ENCODE measurements at regions of chr12 and their contacts with region 1.

Region 1: DNA sequence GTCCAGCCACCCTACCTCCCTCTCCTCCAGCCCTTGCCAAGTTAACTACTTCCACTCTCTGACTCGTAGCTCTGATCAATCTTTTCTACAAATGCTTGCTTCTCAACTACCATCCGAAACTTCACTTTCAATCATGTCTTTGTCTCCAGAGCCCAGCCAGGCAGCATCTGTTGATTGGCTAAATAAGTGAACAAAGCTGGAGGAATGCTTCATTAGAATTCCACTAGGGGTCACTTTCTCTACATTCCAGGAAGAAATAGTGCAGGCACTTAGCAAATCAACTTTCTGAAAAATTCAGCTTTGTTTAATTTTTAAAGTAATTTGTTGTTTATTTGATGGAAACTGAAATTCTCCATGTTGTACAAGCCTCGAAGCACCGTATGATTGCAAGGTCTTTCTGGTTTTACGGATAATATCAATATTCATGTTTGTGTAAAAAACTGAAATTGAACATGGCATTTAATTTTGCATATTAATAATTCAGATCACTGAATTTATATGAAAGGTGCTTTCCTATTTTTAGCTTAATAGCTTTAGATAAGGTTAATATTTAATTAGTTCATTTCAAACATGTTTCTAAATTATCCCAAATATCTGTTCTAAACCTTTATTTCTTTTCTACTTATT is 32.4 kb upstream of the HELB start:
- DNase-seq: no peak
- H3K4me3 ChIP-seq: no peak overlapping the region
- H3K27ac ChIP-seq: no peak overlapping the region
- H3K4me1 ChIP-seq: peaks cover 8% of the 10 kb centered on the region
- H3K27me3 ChIP-seq: no peaks in the 10 kb centered on the region
- CTCF ChIP-seq: peak; percentile 23 to 69 (median 58)

Region 2: GRCh38 chr12:66217342-66217917 is 52.4 kb before region 1 on chr12:
- dilution Hi-C with region 1: no loop called
- DNase-seq: no peak
- H3K4me3 ChIP-seq: no peak overlapping the region
- H3K27ac ChIP-seq: no peak overlapping the region
- H3K4me1 ChIP-seq: no peaks in the 10 kb centered on the region
- H3K27me3 ChIP-seq: no peaks in the 10 kb centered on the region
- CTCF ChIP-seq: no peak

Region 3: GRCh38 chr12:66409195-66409871 is 139.5 kb after region 1 on chr12:
- dilution Hi-C with region 1: loop called (anchors 25 kb)
- DNase-seq: no peak
- H3K4me3 ChIP-seq: no peak overlapping the region
- H3K27ac ChIP-seq: no peak overlapping the region
- H3K4me1 ChIP-seq: peaks cover 39% of the 10 kb centered on the region
- H3K27me3 ChIP-seq: no peaks in the 10 kb centered on the region
- CTCF ChIP-seq: peak; percentile 58 to 63 (median 61)